ENCODE measurements at regions of chr13 and their contacts with region 1.

Region 1: GRCh38 chr13:33723772-33724435 is 94.0 kb upstream of the RFC3 start:
- DNase-seq: no peak
- H3K4me3 ChIP-seq: no peak overlapping the region
- CTCF ChIP-seq: peak; percentile 69

Region 2: DNA sequence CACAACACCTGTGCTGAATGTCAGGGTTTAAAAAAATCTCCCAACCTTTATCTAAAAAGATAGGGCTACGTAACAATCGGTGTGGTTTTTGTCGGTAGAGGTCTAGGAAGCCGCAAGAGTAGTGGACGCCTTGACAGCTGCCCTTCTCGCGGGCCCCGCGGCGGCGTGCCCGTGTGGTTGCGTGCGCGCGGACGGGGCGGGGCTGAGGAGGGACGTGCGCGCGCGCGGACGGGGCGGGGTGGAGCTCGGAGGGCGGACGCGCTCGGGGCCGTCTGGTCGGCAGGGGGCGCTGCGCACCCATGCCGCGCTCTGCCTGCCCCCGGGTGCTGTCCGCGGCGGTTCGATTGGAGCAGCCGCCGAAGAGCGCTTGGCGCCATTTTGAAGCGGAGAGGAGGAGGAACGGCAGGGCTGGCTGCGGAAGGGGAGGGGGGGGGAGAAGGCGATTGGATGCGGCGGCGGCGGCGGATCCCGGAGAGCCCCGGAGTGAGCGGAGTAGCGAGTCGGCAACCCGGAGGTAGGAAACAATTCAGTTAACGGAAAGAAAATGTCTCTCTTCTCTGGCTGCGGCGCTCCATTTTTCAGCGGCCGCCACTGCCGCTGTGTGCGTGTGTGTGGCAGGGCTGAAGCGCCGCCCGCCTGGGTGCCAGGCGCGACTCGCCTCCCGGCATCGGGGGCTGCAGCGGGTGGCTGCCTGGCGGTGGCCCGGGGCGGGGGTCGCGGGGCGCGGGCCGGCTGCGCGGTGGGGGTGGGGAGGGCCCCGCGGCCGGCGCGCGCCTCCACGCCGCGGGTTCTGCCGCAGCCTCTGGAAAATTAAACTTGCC is 1137.6 kb before region 1 on chr13 and contains the start of gene PDS5B:
- CTCF ChIA-PET with region 1: interaction called, 14 read pairs
- POLR2A ChIA-PET with region 1: no interaction called
- DNase-seq: peak; percentile 51
- H3K4me3 ChIP-seq: peak within 1 kb of the TSS; percentile 85
- CTCF ChIP-seq: peak; percentile 80

Region 3: DNA sequence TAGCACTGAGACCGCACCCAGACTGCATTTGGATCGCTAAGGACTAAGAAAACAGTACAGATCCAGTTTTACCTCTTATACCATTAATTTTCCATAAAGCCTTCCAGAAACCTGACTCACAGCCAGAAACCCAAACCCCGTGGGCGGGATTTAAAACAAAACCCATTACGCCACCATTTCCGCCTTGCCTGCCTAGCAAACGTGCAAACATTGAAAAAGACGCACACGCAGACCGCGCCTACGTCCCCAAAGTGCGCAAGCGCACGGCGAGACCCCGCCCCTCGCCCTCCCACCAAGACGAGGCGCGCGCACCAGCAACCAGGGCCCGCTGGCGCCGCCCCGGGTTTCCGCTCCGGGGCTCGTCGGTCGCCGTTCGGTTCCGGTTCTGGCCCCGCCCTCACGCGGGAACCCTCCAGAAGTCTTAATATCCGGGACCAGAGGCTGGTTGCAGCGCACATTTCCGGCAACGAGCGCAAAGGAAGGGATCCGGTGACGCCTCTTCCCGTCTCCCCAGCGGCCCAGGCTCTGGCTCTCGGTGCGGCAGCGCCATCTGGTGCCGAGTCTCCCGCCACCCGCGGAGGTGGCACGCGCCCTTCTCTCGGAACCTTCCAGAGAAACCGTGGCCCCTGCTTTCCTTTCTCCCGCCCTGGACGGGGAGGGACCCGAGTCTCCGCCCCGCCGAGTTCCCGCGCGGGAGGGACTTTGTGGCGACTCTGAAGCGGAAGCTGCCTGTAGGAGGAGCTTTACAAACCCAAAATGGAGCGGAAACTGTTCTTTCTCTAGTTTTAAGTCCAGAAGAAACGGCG is 181.4 kb before region 1 on chr13:
- CTCF ChIA-PET with region 1: interaction called, 71 read pairs
- POLR2A ChIA-PET with region 1: no interaction called
- DNase-seq: peak; percentile 96
- H3K4me3 ChIP-seq: peak overlapping the region; percentile 59
- CTCF ChIP-seq: peak; percentile 95

Region 4: DNA sequence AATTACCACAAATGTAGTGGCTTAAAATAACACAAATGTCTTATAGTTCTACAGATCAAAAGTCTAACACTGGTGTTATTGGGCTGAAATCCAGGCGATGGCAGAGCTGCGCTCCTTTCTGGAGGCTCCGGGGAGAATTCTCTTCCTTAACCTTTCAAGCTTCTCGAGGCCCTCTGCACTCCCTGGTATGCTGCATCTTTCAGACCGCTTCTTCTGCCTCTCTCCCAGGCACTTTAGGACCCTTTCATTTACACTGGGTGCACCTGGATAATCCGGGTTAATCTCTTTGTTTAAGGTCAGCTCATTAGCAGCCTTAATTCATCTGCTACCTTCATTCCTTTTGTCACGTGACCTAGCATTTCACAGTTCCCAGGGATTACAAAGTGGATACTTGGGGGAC is 117.2 kb before region 1 on chr13:
- CTCF ChIA-PET with region 1: interaction called, 11 read pairs
- POLR2A ChIA-PET with region 1: no interaction called
- DNase-seq: no peak
- H3K4me3 ChIP-seq: no peak overlapping the region
- CTCF ChIP-seq: no peak

Region 5: DNA sequence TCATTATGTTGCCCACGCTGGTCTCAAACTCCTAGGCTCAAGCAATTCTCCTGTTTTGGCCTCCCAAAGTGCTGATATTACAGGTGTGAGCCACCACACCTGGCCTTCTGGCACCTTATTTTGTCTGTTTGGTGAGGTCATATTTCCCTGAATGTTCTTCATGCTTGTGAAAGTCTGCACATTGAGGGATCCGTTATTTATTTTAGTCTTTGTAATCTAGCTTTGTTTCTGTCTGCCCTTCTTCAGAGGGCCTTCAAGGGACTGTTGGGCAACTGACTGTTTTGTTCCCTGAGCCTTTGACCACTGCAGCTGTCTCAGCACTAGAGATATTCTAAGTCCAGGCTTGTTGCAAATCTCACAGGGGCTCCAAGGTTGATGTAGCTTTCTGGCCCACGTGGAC is 16.5 kb before region 1 on chr13:
- CTCF ChIA-PET with region 1: interaction called, 10 read pairs
- POLR2A ChIA-PET with region 1: no interaction called
- DNase-seq: no peak
- H3K4me3 ChIP-seq: no peak overlapping the region
- CTCF ChIP-seq: no peak

Region 6: DNA sequence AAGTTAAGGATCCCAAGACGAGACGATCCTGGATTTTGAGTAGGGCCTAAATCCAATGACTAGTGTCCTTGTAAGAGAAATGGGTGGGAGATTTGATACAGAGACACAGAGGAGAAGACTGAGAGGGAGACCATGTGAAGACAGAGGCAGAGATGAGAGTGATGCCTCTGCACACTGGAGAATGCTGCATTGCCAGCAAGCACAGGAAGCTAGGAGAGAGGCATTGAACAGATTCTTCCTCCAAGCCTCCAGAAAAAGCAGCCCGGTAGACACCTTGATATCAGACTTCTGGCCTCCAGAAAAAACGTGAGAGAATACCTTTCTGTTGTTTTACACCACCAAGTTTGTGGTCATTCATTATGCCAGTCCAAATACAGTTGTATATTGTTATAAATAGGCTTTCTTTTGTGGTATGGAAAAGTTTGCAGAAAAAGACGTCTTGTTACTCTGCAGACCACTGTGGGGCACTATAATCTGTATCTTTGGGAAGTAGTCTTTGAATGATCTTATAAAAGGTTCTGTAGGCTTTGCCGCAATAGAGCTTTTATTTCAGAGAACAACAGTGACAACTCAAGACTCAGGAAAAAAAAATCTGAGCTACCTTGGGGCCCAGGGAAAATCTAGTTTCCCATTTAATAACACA is 76.2 kb after region 1 on chr13:
- CTCF ChIA-PET with region 1: no interaction called
- POLR2A ChIA-PET with region 1: no interaction called
- DNase-seq: peak; percentile 10
- H3K4me3 ChIP-seq: no peak overlapping the region
- CTCF ChIP-seq: peak; percentile 32

Measured in AG04449 (cell line).